ENCODE measurements at regions of chr7 and their contacts with region 1.

Region 1: DNA sequence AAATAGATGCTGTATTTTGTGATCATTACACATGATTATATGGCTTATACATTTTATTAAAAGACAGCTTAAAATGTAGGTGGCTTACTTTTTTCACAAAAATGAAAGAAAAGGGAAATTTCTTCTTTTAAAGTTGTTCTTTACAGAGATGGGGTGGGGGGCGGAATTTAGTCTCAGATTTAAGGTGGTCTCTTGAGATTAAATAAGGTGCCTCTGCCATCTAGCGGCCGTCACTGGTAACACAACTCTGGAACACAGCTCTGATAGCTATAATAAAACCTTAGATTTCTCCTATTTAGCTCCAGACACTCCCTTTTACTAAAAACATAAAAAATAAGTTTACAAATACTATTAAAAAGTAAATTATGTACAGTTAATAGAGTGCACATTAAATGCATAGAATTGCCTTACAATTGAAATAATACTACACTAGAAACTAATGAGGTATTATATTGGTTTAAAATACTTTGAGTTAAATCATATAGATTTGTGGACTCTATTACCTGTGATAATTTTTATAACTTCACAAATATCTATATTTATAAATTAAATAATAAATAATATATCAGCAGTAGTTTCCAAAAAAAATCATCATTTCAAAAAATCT is 210.9 kb downstream of the DGKB start:
- DNase-seq: peak; percentile 59
- H3K4me3 ChIP-seq: no peak overlapping the region; a peak in 1 of 4 replicates
- H3K27ac ChIP-seq: no peak overlapping the region
- H3K4me1 ChIP-seq: peaks cover 0 to 29% of the 10 kb centered on the region in 2 experiments; a peak in 3 of 4 replicates
- H3K27me3 ChIP-seq: no peaks in the 10 kb centered on the region
- CTCF ChIP-seq: peak; percentile 100
- EP300 ChIP-seq: no peak
- RAD21 ChIP-seq: peak; percentile 95

Region 2: DNA sequence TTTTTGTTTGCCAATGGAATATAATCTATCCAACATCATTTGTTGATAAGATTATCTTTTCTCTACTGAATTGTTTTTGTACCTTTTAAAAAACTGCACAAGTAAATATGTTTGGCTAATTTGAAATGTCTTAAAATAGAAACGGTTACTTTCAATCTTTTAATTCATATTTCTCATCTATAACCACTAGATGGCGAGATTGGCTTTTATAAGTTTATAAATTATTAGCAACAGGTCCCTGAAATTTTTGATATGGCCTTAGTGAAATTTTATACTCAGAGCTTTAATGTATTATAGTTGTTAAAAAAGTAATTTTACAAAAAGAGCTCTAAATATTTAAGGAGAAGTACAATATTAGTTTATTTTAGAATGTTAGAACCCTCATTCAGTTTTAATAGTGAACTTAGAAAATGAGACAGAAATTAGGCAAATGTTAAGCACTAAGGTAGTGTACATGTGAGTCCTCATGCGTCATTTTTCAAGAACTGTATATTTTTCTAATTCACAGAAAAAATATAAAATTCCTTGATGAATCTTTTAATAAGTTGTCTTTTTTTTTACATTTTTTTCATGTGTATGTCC is 1411.8 kb before region 1 on chr7:
- CTCF ChIA-PET with region 1: interaction called, 165 read pairs
- POLR2A ChIA-PET with region 1: interaction called, 3 read pairs
- DNase-seq: peak; percentile 23
- H3K4me3 ChIP-seq: no peak overlapping the region
- H3K27ac ChIP-seq: no peak overlapping the region
- H3K4me1 ChIP-seq: no peaks in the 10 kb centered on the region
- H3K27me3 ChIP-seq: no peaks in the 10 kb centered on the region; the same call in 1 of the 2 replicates
- CTCF ChIP-seq: peak; percentile 79
- EP300 ChIP-seq: no peak
- RAD21 ChIP-seq: peak; percentile 73

Region 3: DNA sequence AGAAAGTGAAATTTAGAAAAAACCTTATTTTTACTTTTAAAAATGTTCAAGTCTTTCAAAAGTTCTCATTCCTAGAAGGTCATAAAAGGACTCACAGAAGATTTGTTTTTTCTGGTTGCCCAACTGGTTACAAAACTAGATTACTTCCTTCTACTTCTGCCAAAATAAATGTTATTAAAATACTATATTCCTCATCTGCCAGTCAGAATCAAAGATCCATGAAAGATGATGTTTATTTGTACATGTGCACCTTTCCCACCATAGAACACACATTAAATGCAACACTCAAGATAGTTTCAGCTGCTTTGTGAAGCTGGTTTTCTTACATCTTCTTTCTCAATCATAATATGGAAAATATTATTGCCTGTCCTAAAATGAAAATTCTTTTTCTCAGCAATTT is 1167.6 kb before region 1 on chr7:
- CTCF ChIA-PET with region 1: interaction called, 45 read pairs
- POLR2A ChIA-PET with region 1: no interaction called
- DNase-seq: no peak
- H3K4me3 ChIP-seq: no peak overlapping the region
- H3K27ac ChIP-seq: no peak overlapping the region
- H3K4me1 ChIP-seq: peaks cover 0 to 2% of the 10 kb centered on the region in 2 experiments; a peak in 1 of 4 replicates
- H3K27me3 ChIP-seq: no peaks in the 10 kb centered on the region
- CTCF ChIP-seq: no peak
- EP300 ChIP-seq: no peak
- RAD21 ChIP-seq: no peak

Region 4: DNA sequence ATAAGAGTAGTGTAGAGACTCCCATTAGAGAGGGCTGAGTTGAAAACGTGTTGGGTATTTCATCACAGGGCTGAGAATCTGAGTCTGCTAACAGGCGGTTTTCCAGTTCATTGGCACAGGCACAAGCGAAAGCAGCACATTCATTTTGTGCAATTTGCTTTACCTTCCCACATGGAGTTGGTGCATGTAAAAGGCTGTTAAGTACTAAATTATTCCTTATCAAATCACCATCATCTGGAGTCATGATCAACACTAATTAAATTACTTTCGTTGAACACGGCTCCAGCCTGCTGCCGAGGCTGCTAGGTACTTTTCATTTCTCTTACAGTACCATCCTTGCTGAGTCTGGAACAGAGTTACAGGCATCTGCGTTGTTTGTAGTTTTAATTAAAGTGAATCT is 746.0 kb before region 1 on chr7:
- CTCF ChIA-PET with region 1: interaction called, 11 read pairs
- POLR2A ChIA-PET with region 1: no interaction called
- DNase-seq: peak; percentile 72
- H3K4me3 ChIP-seq: peak overlapping the region; percentile 23 to 44; a peak in 3 of 4 replicates
- H3K27ac ChIP-seq: peak overlapping the region; percentile 30 to 75; a peak in 3 of 4 replicates
- H3K4me1 ChIP-seq: peaks cover 11 to 38% of the 10 kb centered on the region in 2 experiments; a peak in 3 of 4 replicates
- H3K27me3 ChIP-seq: no peaks in the 10 kb centered on the region
- CTCF ChIP-seq: no peak
- EP300 ChIP-seq: peak in 1 of 2 experiments; percentile 96; a peak in 2 of 4 replicates
- RAD21 ChIP-seq: peak; percentile 46

Region 5: DNA sequence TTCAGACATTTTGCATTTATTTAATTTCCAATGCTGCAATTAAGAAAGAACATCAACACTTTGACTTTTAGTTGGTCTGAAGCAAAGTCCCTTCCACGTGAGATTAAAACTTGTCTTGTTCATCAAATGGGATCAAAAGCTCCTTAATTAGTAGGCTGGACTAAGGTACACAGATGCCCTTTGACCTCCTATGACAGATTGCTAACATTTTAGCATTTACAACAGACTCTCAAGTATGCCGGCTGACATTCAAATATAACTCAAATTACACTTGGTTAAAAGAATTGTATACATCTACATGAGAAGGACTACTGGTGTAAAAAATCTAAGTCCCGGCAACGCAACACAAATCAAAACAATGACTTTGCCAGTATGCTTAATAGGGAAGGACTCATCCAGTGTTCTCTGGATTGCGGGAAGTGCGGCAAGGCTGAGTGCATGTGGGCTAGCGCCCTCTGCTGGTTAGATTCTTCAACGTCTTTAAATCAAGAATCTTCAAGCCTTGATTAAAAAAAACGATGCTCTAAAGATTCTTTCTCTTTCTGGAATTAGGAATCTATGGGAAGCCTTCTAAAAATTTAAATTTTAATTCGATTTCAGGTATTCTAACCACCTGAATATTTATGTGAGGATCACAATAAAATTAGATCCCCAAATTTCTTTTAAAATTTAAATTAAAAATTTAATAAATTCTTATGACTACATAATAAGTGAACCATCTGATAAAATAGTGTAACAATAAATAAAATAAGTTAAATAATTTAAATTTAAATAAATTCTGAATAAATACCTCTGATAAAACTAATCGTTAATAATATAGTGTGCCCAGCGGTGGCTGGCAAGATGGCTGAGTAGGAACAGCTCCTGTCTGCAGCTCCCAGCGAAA is 233.9 kb before region 1 on chr7:
- CTCF ChIA-PET with region 1: interaction called, 36 read pairs
- POLR2A ChIA-PET with region 1: no interaction called
- DNase-seq: peak; percentile 53
- H3K4me3 ChIP-seq: peak overlapping the region; percentile 6 to 9; a peak in 1 of 4 replicates
- H3K27ac ChIP-seq: no peak overlapping the region; a peak in 1 of 4 replicates
- H3K4me1 ChIP-seq: no peaks in the 10 kb centered on the region; a peak in 1 of 4 replicates
- H3K27me3 ChIP-seq: no peaks in the 10 kb centered on the region
- CTCF ChIP-seq: peak; percentile 98
- EP300 ChIP-seq: no peak
- RAD21 ChIP-seq: peak; percentile 98

Region 6: GRCh38 chr7:14673202-14673601 is 18.5 kb before region 1 on chr7:
- CTCF ChIA-PET with region 1: interaction called, 41 read pairs
- POLR2A ChIA-PET with region 1: no interaction called
- DNase-seq: no peak
- H3K4me3 ChIP-seq: no peak overlapping the region
- H3K27ac ChIP-seq: no peak overlapping the region
- H3K4me1 ChIP-seq: peaks cover 0 to 9% of the 10 kb centered on the region in 2 experiments; a peak in 2 of 4 replicates
- H3K27me3 ChIP-seq: no peaks in the 10 kb centered on the region
- CTCF ChIP-seq: no peak
- EP300 ChIP-seq: peak in 1 of 2 experiments; percentile 46; a peak in 1 of 4 replicates
- RAD21 ChIP-seq: no peak

Measured in SK-N-SH (cell line).